ENCODE measurements at regions of chr10 and their contacts with region 1.

Region 1: DNA sequence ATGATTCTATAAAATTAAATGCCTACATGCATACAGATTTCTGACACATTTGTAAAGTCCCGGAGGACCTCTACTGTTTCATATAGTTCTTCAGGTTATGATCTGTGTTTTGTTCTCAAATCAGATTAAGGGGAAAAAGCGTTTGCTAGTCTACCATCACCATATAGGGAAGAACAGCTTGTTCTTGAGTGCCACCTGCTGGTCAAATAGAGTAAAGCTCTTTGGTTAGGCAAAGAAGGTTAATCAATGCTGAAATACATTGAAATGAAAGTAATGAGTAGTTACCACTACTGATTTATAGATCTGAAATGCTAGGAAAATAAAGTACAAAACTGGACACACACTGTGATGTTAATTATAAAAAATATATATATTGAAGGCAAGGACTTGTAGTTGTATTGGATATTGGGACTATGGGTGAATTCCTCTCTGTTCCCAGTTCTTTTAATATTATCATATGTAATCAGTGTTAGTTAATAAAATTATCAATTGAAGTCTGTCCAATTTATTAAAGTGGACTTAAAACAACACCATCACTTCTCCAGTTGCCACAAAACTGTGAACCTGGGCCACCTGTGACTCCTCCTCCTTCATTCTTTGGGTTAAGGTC is 72.6 kb upstream of the PDLIM1 start:
- DNase-seq: peak; percentile 68
- H3K4me3 Mint-ChIP-seq: no peak overlapping the region
- H3K27ac Mint-ChIP-seq: no peak overlapping the region
- H3K4me1 Mint-ChIP-seq: no peaks in the 10 kb centered on the region
- H3K27me3 Mint-ChIP-seq: peaks cover 7% of the 10 kb centered on the region

Region 2: GRCh38 chr10:94630017-94630688 is 733.3 kb before region 1 on chr10:
- CTCF ChIA-PET with region 1: no interaction called
- intact Hi-C with region 1: loop called (anchors 2 kb)
- DNase-seq: no peak
- H3K4me3 Mint-ChIP-seq: no peak overlapping the region
- H3K27ac Mint-ChIP-seq: no peak overlapping the region
- H3K4me1 Mint-ChIP-seq: no peaks in the 10 kb centered on the region
- H3K27me3 Mint-ChIP-seq: peaks cover 5% of the 10 kb centered on the region

Region 3: DNA sequence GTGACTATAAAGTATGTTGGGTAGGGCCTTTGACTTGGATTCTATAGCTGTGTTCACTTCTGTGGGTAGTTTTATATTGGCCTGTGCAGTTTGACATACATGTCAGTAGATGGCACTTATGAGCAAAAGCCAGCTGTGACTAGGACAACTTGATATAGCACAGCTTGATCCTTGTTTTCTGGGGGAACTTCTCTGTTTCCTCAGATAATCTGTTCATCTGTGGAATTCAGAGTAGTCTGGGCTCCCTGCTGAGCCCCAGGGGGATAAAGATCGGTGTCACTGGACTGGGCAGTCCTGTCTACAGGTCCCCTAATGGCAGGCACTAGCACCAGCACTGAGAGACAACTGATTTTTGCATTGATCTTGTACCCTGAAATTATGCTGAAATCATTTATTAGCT is 399.5 kb before region 1 on chr10:
- CTCF ChIA-PET with region 1: no interaction called
- intact Hi-C with region 1: loop called (anchors 5 kb)
- DNase-seq: no peak
- H3K4me3 Mint-ChIP-seq: no peak overlapping the region
- H3K27ac Mint-ChIP-seq: no peak overlapping the region
- H3K4me1 Mint-ChIP-seq: no peaks in the 10 kb centered on the region
- H3K27me3 Mint-ChIP-seq: no peaks in the 10 kb centered on the region

Region 4: DNA sequence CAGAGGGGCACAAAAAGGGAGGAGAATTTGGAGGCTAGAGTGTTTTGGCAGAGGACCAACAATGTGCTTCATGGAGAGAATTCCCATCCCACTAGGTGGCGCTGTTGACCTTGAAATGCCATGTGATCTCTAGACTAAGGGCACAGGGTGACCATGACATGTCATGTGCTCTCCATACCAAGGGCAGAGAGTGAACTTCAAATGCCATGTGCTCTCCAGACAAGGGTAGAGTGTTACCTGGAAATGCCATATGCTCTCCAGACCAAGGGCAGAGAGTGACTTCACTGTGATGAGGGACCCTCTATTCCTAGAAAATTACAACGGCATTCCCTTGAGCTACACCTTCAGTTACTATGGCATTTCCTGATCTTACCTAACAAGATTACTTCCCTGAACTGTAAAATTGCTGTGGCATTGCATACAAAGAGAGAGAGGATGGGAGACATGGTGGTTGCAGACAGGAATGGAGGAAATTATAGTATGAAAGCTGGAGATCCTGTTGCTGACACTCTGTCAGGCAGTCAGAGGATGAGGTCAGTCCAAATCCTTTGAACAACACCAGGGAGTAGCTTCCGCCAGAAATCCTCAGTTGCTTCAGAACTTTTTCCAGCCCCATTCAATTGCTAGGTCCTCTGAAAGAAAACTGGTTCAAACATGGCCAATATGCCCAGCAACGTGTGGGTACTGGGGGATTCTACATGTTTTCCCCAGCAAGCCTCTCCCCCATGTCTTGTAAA is 230.2 kb before region 1 on chr10:
- CTCF ChIA-PET with region 1: interaction called, 12 read pairs
- intact Hi-C with region 1: loop called (anchors 1 kb)
- DNase-seq: peak; percentile 88
- H3K4me3 Mint-ChIP-seq: no peak overlapping the region
- H3K27ac Mint-ChIP-seq: no peak overlapping the region
- H3K4me1 Mint-ChIP-seq: no peaks in the 10 kb centered on the region
- H3K27me3 Mint-ChIP-seq: no peaks in the 10 kb centered on the region

Region 5: GRCh38 chr10:95183271-95184230 is 179.9 kb before region 1 on chr10:
- CTCF ChIA-PET with region 1: interaction called, 6 read pairs
- intact Hi-C with region 1: loop called (anchors 1 kb)
- DNase-seq: peak; percentile 74
- H3K4me3 Mint-ChIP-seq: peak overlapping the region; percentile 61
- H3K27ac Mint-ChIP-seq: no peak overlapping the region
- H3K4me1 Mint-ChIP-seq: peaks cover 3% of the 10 kb centered on the region
- H3K27me3 Mint-ChIP-seq: peaks cover 29% of the 10 kb centered on the region

Region 6: GRCh38 chr10:95290461-95291364 is 72.7 kb before region 1 on chr10 and contains the start of gene PDLIM1:
- CTCF ChIA-PET with region 1: interaction called, 5 read pairs
- intact Hi-C with region 1: loop called (anchors 5 kb)
- DNase-seq: peak; percentile 30
- H3K4me3 Mint-ChIP-seq: peak within 1 kb of the TSS; percentile 55
- H3K27ac Mint-ChIP-seq: no peak within 1 kb of the TSS
- H3K4me1 Mint-ChIP-seq: peaks cover 16% of the 10 kb centered on the region
- H3K27me3 Mint-ChIP-seq: peaks cover 56% of the 10 kb centered on the region
- total RNA-seq, gene PDLIM1: 0.27 to 0.33 TPM

Region 7: DNA sequence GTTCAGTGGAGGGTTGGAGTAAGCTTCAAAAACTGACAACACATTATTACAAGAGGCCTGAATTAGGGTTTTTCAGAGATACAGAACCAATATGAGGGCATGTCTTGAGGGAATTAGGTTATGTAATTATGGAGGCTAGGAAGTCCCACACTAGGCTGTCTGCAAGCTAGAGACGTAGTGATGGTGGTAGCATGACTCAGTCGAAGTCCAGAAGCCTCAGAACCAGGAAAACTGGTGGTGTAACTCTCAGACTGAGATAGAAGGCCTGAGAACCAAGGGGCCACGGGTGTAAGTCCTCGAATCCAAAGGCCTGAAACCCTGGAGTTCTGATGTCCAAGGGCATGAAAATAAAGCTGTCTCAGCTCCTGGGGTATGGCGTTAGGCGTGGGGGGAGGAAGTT is 802.3 kb after region 1 on chr10:
- CTCF ChIA-PET with region 1: no interaction called
- intact Hi-C with region 1: no loop called
- DNase-seq: no peak
- H3K4me3 Mint-ChIP-seq: no peak overlapping the region
- H3K27ac Mint-ChIP-seq: no peak overlapping the region
- H3K4me1 Mint-ChIP-seq: no peaks in the 10 kb centered on the region
- H3K27me3 Mint-ChIP-seq: no peaks in the 10 kb centered on the region